ENCODE measurements at regions of chr7 and their contacts with region 1.

Region 1: GRCh38 chr7:34321000-34321581 is 336.9 kb upstream of the NPSR1 start:
- DNase-seq: peak; percentile 85
- H3K4me3 Mint-ChIP-seq: peak overlapping the region; percentile 59
- H3K27ac Mint-ChIP-seq: peak overlapping the region; percentile 32
- H3K4me1 Mint-ChIP-seq: peaks cover 25% of the 10 kb centered on the region
- H3K27me3 Mint-ChIP-seq: no peaks in the 10 kb centered on the region
- CTCF ChIP-seq: peak; percentile 85

Region 2: DNA sequence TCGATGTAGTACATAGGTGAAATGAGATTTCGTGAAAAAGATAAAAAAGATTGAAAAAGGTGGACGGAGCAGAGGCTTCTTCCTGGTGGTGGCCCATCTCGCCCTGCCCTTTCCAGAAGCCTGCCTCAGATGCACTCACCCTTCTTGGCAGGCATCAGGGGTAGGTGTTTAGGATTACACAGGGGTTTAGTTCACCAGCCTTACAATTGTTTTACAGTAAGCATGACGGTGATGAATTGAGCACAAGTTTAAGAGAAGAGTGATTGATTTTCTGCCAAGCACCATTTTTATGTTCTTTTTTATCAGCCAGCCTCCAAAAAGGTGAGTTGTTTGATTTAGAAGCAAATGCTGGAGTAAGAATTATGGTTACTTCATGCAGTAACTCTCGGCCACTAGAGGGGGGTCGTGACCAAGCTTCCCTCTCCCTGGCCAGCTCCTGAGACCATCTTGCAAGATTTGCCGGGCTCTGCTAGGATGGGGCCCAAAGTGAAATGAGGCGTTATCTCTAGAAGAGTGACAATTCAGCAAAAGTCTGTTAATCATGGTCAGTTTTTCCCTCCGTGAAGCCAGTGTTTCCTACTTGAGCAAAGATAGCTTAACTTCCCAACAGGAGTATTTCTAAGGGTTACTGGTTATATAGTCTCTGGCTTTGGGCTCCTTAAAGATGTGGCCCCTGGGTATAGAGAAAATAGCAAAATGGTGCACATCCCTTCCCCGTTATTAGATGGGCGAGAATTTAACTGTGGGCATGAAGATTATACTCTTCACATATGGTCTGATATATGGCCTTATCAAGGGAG is 186.9 kb before region 1 on chr7:
- CTCF ChIA-PET with region 1: interaction called, 29 read pairs
- POLR2A ChIA-PET with region 1: interaction called, 4 read pairs
- intact Hi-C with region 1: loop called (anchors 1 kb)
- DNase-seq: peak; percentile 77
- H3K4me3 Mint-ChIP-seq: peak overlapping the region; percentile 60
- H3K27ac Mint-ChIP-seq: peak overlapping the region; percentile 99
- H3K4me1 Mint-ChIP-seq: peaks cover 45% of the 10 kb centered on the region
- H3K27me3 Mint-ChIP-seq: no peaks in the 10 kb centered on the region
- CTCF ChIP-seq: peak; percentile 81

Region 3: DNA sequence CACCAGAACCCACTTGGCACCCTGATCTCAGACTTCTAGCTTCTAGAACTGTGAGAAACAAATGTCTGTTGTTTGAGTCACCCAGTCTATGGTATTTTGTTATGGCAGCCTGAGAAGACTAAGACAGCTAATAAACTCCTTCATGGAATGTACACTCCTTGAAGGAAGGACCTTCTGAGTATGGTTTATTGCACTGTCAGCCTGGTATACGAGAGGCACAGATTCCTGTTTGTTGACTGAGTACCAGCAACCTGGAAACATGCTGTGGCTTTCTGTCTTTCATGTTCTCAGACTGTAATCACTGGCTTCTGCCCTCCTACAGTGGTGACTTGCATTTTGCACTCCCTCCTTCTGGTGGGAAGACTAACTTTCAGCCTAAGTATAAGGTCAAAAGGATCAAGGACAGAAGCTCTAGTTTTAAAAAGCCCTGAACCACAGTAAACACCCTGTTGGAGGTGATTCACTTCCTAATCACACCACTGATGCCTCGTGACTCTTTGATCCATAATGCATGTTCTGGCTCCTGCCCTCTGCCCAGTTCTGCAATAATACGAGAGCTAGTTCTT is 18.0 kb after region 1 on chr7:
- CTCF ChIA-PET with region 1: interaction called, 33 read pairs
- POLR2A ChIA-PET with region 1: no interaction called
- intact Hi-C with region 1: no loop called
- DNase-seq: peak; percentile 15
- H3K4me3 Mint-ChIP-seq: no peak overlapping the region
- H3K27ac Mint-ChIP-seq: peak overlapping the region; percentile 70
- H3K4me1 Mint-ChIP-seq: peaks cover 20% of the 10 kb centered on the region
- H3K27me3 Mint-ChIP-seq: no peaks in the 10 kb centered on the region
- CTCF ChIP-seq: no peak

Region 4: DNA sequence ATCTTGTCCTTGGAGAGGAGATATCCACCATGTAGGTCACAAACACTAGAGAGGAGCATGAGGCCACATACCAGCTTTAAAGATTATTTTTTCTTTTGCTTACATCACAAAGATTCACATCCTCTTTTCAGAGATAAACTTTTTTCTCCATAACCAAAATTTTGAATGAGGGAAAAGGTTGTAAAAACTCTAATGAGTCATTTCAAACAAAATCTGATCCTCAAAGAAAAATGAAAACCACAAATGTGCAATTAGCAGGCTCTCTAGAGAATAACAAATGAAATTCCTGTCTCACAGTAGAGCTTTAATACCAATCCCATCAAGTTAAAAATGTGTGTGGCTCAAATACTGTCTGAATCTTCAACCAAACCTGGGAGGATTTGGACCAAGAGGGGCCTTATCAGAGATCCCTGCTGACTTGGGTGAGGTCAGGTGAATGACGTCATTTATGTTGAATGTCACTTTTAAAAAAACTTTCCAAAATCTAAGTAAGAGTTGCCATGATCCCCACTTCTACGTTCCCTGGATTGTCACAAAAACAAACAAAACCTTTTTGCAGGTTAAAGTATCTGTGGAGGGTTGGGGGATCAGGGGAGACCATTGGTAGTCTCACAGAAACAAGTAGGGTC is 75.5 kb after region 1 on chr7:
- CTCF ChIA-PET with region 1: interaction called, 11 read pairs
- POLR2A ChIA-PET with region 1: no interaction called
- intact Hi-C with region 1: no loop called
- DNase-seq: no peak
- H3K4me3 Mint-ChIP-seq: no peak overlapping the region
- H3K27ac Mint-ChIP-seq: no peak overlapping the region
- H3K4me1 Mint-ChIP-seq: no peaks in the 10 kb centered on the region
- H3K27me3 Mint-ChIP-seq: no peaks in the 10 kb centered on the region
- CTCF ChIP-seq: no peak

Region 5: DNA sequence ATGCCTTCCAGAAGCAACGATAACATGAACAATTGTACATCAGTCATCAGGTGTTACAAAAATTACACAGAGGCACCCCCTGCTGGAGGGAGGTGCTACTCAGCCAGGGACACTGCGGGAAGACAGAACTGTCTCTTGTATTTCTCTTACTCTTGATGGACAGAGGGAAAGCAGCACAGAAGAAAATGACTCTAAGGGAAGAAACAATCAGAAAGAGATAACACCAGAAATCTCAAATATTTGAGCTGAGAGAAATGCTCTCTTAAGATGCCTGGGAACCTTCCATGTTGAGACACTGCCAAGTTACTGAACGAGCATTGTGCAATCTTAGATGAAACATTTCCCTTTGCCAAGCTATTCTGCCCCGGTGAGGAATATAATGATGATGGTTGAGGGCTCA is 109.4 kb after region 1 on chr7:
- CTCF ChIA-PET with region 1: interaction called, 16 read pairs
- POLR2A ChIA-PET with region 1: no interaction called
- intact Hi-C with region 1: loop called (anchors 1 kb)
- DNase-seq: peak; percentile 83
- H3K4me3 Mint-ChIP-seq: no peak overlapping the region
- H3K27ac Mint-ChIP-seq: no peak overlapping the region
- H3K4me1 Mint-ChIP-seq: peaks cover 9% of the 10 kb centered on the region
- H3K27me3 Mint-ChIP-seq: no peaks in the 10 kb centered on the region
- CTCF ChIP-seq: peak; percentile 48

Region 6: DNA sequence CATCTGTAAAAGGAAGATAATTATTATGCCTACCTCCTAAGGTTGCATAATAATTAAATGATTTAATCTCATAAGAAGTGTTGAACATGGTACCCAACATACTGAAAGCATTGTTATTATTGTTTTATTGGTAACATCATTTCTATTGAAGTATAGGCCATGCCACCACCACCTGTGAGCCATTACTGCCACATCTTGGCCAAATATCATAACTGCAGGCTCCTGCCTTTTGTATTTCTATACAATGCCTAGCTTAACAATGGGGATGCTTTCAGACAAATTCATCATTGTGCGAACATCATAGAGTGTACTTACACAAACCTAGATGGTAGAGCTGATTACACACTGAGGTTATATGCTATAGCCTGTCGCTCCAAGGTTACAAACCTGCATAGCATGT is 275.8 kb after region 1 on chr7:
- CTCF ChIA-PET with region 1: interaction called, 97 read pairs
- POLR2A ChIA-PET with region 1: interaction called, 13 read pairs
- intact Hi-C with region 1: loop called (anchors 1 kb)
- DNase-seq: peak; percentile 49
- H3K4me3 Mint-ChIP-seq: no peak overlapping the region
- H3K27ac Mint-ChIP-seq: no peak overlapping the region
- H3K4me1 Mint-ChIP-seq: no peaks in the 10 kb centered on the region
- H3K27me3 Mint-ChIP-seq: no peaks in the 10 kb centered on the region
- CTCF ChIP-seq: peak; percentile 63

Measured in MCF 10A (cell line).